ENCODE measurements at regions of chr9 and their contacts with region 1.

Region 1: GRCh38 chr9:100011062-100011681 is 87.6 kb downstream of the ERP44 start:
- DNase-seq: peak; percentile 62
- H3K4me3 ChIP-seq: no peak overlapping the region
- H3K27ac ChIP-seq: no peak overlapping the region
- H3K4me1 ChIP-seq: no peaks in the 10 kb centered on the region
- H3K27me3 ChIP-seq: no peaks in the 10 kb centered on the region
- CTCF ChIP-seq: peak; percentile 37 to 44
- POLR2A ChIP-seq: no peak

Region 2: DNA sequence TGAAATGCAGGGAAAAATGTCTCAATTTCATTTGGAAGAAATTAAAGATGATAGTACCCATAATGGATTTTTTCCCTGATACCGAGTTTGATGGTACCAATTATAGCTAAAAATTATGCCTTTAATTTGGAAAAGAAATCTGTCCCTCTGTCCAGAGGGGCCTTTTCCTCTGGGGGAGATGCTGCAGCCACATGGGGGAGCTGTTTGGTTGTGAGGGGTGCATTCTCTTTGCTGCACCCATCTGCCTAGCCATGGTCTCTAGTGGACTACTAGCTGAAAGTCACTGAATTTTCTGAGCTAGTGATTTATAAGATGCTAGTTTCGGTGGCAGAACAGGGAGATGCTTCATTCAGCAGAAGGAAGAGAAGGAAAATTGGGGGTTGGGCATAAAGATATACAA is 779.5 kb before region 1 on chr9:
- CTCF ChIA-PET with region 1: interaction called, 12 read pairs
- POLR2A ChIA-PET with region 1: no interaction called
- dilution Hi-C with region 1: no loop called
- intact Hi-C with region 1: no loop called
- DNase-seq: no peak
- H3K4me3 ChIP-seq: no peak overlapping the region
- H3K27ac ChIP-seq: no peak overlapping the region
- H3K4me1 ChIP-seq: no peaks in the 10 kb centered on the region
- H3K27me3 ChIP-seq: no peaks in the 10 kb centered on the region
- CTCF ChIP-seq: peak; percentile 45 to 55
- POLR2A ChIP-seq: no peak

Region 3: DNA sequence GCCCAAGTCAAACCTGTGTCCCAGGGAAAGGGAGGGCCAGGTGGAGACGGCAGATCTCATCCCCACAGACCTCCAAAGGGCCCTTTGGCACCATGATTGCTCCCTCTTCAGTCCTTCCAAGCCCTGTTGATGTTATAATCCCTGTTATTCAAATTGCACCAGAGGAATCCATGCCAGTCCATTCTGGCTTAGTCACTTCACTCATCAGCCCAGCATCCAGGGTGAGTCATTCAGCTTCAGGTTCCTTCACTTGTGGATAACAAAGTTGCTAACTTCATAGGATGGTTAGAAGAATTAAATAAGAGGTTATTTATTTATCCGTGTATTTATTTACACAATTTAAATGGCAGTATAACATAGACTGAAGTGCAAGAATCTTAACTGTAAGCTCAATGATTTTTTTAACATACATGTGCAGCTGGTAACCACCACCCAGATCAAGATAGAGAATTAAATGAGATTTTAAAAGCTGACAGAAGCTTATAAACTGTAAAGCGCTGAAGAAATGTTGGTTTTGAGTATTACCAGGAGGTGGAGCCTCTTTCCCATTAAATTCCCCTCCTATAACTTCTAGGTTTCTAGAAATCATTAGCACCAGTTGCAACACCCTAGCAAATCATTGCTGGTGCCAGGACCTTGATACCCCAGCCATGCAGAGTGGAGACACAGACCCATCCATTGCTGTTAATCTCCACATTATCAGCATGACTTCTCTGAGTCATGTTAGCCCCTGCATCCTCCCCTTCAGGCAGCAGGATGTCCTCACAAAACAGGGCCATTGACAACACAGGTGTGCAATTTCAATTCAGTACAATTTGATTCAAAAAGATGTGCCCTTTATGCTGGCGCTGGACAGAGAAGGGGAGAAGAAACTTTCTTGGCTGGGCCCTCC is 711.7 kb before region 1 on chr9:
- CTCF ChIA-PET with region 1: interaction called, 16 read pairs
- POLR2A ChIA-PET with region 1: no interaction called
- dilution Hi-C with region 1: no loop called
- intact Hi-C with region 1: no loop called
- DNase-seq: peak; percentile 38
- H3K4me3 ChIP-seq: no peak overlapping the region
- H3K27ac ChIP-seq: no peak overlapping the region
- H3K4me1 ChIP-seq: peaks cover 3% of the 10 kb centered on the region
- H3K27me3 ChIP-seq: peaks cover 0 to 3% of the 10 kb centered on the region in 2 experiments
- CTCF ChIP-seq: no peak
- POLR2A ChIP-seq: no peak

Region 4: DNA sequence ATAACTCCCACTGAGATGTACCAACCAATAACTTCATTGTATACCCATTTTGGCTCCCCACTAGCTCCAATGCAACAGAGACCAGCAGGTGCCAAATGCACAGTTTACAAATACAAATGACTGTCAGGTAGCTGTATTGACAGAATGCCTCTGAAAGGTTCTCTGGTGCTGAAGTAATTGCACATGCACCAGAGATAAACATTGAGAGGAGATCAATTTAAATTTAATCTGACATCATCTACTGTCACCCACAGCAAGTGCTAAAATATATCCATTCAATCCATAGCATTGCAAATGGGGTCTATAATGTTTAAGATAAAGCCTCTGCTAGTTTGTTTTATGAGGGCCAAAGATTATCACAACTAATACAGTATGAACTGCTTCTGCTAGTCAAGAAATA is 24.5 kb before region 1 on chr9:
- CTCF ChIA-PET with region 1: interaction called, 10 read pairs
- POLR2A ChIA-PET with region 1: no interaction called
- dilution Hi-C with region 1: no loop called
- intact Hi-C with region 1: no loop called
- DNase-seq: no peak
- H3K4me3 ChIP-seq: no peak overlapping the region
- H3K27ac ChIP-seq: no peak overlapping the region
- H3K4me1 ChIP-seq: no peaks in the 10 kb centered on the region
- H3K27me3 ChIP-seq: no peaks in the 10 kb centered on the region
- CTCF ChIP-seq: no peak
- POLR2A ChIP-seq: no peak

Region 5: DNA sequence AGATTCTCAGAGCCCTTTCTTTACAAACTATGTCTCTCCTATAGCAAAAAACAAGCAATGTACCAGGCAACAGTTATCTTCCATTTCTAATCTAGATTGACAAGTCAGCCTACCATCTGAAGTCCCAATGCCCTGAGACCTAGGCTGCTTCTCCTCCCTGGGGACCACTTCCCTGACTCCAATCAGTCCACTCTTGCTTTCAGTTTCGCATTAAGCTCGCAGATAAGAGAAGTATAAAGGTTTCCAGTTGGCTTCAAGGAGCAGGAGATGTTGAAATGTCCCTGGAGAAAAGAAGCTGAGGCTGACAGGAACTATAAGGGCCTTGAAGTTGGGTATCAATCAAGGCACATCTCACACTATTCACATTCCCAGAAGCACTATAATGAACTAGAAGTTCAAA is 55.4 kb after region 1 on chr9:
- CTCF ChIA-PET with region 1: no interaction called
- POLR2A ChIA-PET with region 1: no interaction called
- dilution Hi-C with region 1: no loop called
- intact Hi-C with region 1: no loop called
- DNase-seq: no peak
- H3K4me3 ChIP-seq: no peak overlapping the region
- H3K27ac ChIP-seq: no peak overlapping the region
- H3K4me1 ChIP-seq: peaks cover 3% of the 10 kb centered on the region
- H3K27me3 ChIP-seq: no peaks in the 10 kb centered on the region
- CTCF ChIP-seq: no peak
- POLR2A ChIP-seq: no peak

Region 6: DNA sequence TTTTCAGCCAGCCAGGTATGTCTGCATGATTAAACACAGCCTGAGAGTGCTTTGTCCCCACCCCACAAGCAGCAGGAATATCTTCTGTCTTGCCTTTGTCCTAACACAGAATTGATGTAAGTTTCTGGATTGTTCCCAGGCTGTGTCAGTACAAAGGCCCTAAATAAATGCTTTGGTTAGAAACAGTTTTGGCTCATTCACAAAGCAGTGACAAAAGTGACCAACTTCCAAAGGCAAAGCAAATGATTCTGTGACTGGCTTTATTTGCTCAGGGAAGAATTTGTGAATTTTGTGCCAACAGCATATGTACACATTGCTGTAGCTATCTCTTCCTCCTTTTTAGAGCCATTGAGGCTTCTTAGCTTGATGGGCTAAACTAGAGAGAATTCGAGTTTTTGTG is 1151.1 kb after region 1 on chr9:
- CTCF ChIA-PET with region 1: no interaction called
- POLR2A ChIA-PET with region 1: no interaction called
- dilution Hi-C with region 1: no loop called
- intact Hi-C with region 1: no loop called
- DNase-seq: no peak
- H3K4me3 ChIP-seq: no peak overlapping the region
- H3K27ac ChIP-seq: no peak overlapping the region
- H3K4me1 ChIP-seq: no peaks in the 10 kb centered on the region
- H3K27me3 ChIP-seq: peaks cover 0 to 1% of the 10 kb centered on the region in 2 experiments
- CTCF ChIP-seq: no peak
- POLR2A ChIP-seq: no peak